WTC11 (cell line): ENCODE measurements at regions of chr11 and their contacts with region 1.

Region 1: DNA sequence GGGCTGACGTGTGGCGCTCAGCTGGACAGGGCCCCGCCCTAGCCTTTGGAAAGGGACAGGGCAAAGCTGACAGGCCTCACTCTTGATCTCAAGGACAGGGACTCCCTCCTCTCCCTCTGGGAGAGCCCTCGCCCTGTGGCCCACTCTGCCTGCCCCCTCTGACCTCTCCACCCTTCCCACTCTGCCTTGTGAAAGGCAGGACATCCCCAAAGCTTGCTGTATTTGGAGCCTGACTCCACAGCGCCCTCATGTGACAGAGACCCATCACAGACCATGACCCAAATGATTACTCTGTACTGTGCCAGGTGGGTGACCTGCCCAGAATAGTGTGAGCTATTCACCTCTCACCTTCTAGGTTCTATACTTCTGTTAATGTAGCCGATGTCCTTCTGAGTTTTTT is 18.8 kb downstream of the P2RY2 start:
- DNase-seq: peak; percentile 83
- ATAC-seq: peak; percentile 94
- H3K4me3 Mint-ChIP-seq: no peak overlapping the region
- H3K27ac Mint-ChIP-seq: no peak overlapping the region
- H3K4me1 Mint-ChIP-seq: 0 out of 2 replicates have a peak, but pooled peaks cover 4% of the 10 kb centered on the region
- H3K27me3 Mint-ChIP-seq: no peaks in the 10 kb centered on the region
- CTCF ChIP-seq: peak; percentile 78

Region 2: GRCh38 chr11:73141848-73142286 is 95.0 kb before region 1 on chr11:
- CTCF ChIA-PET with region 1: interaction called, 16 read pairs
- POLR2A ChIA-PET with region 1: interaction called, 3 read pairs
- DNase-seq: peak; percentile 69
- ATAC-seq: peak; percentile 41
- H3K4me3 Mint-ChIP-seq: peak overlapping the region; percentile 87
- H3K27ac Mint-ChIP-seq: 0 out of 2 replicates have a peak overlapping the region, but pooled peaks have one; percentile 41
- H3K4me1 Mint-ChIP-seq: peaks cover 23% of the 10 kb centered on the region
- H3K27me3 Mint-ChIP-seq: peaks cover 19% of the 10 kb centered on the region
- CTCF ChIP-seq: no peak

Region 3: GRCh38 chr11:73184953-73185671 is 51.7 kb before region 1 on chr11:
- CTCF ChIA-PET with region 1: interaction called, 129 read pairs
- POLR2A ChIA-PET with region 1: no interaction called
- DNase-seq: peak; percentile 78
- ATAC-seq: peak; percentile 80
- H3K4me3 Mint-ChIP-seq: no peak overlapping the region
- H3K27ac Mint-ChIP-seq: no peak overlapping the region
- H3K4me1 Mint-ChIP-seq: peaks cover 10% of the 10 kb centered on the region
- H3K27me3 Mint-ChIP-seq: no peaks in the 10 kb centered on the region
- CTCF ChIP-seq: peak; percentile 71

Region 4: DNA sequence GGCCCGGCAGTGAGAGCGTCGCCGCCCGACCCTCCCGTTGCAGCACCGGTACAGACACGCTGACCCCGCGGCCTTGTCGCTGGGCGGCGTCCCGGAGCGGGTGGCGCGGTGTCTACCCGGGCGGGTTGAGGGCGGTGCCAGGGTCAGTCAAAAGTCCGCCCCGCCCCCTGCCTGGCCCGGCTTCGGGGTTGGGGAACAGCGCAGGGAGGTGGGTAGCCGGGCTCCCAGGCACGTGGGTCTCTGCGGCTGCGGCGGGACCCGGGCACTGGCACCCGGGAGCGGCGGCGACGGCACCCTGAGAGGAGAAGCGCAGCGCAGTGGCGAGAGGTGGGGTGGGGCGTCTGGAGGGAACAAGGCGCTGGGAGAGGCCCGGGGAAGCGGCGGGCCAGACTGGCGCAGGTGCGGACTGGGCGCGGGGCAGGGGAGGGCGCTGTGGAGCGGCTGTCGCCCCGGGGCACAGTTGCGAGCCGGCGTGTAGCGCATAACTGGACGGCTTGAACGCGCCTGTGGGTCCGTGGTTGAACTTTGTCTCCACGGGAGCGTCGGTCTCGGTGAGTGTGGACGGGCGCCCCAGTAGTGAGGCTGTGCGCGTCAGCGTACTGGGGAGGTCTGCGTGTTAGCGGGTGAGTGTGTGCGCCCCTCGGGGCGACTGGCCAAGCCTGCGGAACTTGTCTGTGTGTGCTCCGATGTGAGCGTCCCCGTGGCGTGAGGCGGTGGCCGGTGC is 18.6 kb before region 1 on chr11 and contains the start of gene P2RY2:
- CTCF ChIA-PET with region 1: interaction called, 27 read pairs
- POLR2A ChIA-PET with region 1: interaction called, 5 read pairs
- DNase-seq: peak; percentile 80
- ATAC-seq: peak; percentile 88
- H3K4me3 Mint-ChIP-seq: peak within 1 kb of the TSS; percentile 78
- H3K27ac Mint-ChIP-seq: no peak within 1 kb of the TSS
- H3K4me1 Mint-ChIP-seq: peaks cover 8% of the 10 kb centered on the region
- H3K27me3 Mint-ChIP-seq: peaks cover 58% of the 10 kb centered on the region
- CTCF ChIP-seq: no peak
- total RNA-seq, gene P2RY2: 0.94 to 1.2 TPM (median 1.2 TPM) in 3 replicates

Region 5: GRCh38 chr11:73271936-73272719 is 35.3 kb after region 1 on chr11 and contains the start of gene P2RY6:
- CTCF ChIA-PET with region 1: interaction called, 17 read pairs
- POLR2A ChIA-PET with region 1: no interaction called
- DNase-seq: peak; percentile 13
- ATAC-seq: no peak; the same call in 1 of the 2 replicates
- H3K4me3 Mint-ChIP-seq: no peak within 1 kb of the TSS
- H3K27ac Mint-ChIP-seq: no peak within 1 kb of the TSS; the same call in 1 of the 2 replicates
- H3K4me1 Mint-ChIP-seq: peaks cover 34% of the 10 kb centered on the region
- H3K27me3 Mint-ChIP-seq: 0 out of 2 replicates have a peak, but pooled peaks cover under 1% of the 10 kb centered on the region
- CTCF ChIP-seq: no peak
- total RNA-seq, gene P2RY6: 0.11 to 0.16 TPM in 2 of 3 replicates, not detected in the other

Region 6: GRCh38 chr11:73335204-73335923 is 98.5 kb after region 1 on chr11:
- CTCF ChIA-PET with region 1: interaction called, 10 read pairs
- POLR2A ChIA-PET with region 1: no interaction called
- DNase-seq: peak; percentile 94
- ATAC-seq: peak; percentile 38
- H3K4me3 Mint-ChIP-seq: no peak overlapping the region
- H3K27ac Mint-ChIP-seq: no peak overlapping the region
- H3K4me1 Mint-ChIP-seq: peaks cover 50% of the 10 kb centered on the region
- H3K27me3 Mint-ChIP-seq: peaks cover 64% of the 10 kb centered on the region
- CTCF ChIP-seq: peak; percentile 95